HCT116 (cell line): ENCODE measurements at regions of chr10 and their contacts with region 1.

Region 1: DNA sequence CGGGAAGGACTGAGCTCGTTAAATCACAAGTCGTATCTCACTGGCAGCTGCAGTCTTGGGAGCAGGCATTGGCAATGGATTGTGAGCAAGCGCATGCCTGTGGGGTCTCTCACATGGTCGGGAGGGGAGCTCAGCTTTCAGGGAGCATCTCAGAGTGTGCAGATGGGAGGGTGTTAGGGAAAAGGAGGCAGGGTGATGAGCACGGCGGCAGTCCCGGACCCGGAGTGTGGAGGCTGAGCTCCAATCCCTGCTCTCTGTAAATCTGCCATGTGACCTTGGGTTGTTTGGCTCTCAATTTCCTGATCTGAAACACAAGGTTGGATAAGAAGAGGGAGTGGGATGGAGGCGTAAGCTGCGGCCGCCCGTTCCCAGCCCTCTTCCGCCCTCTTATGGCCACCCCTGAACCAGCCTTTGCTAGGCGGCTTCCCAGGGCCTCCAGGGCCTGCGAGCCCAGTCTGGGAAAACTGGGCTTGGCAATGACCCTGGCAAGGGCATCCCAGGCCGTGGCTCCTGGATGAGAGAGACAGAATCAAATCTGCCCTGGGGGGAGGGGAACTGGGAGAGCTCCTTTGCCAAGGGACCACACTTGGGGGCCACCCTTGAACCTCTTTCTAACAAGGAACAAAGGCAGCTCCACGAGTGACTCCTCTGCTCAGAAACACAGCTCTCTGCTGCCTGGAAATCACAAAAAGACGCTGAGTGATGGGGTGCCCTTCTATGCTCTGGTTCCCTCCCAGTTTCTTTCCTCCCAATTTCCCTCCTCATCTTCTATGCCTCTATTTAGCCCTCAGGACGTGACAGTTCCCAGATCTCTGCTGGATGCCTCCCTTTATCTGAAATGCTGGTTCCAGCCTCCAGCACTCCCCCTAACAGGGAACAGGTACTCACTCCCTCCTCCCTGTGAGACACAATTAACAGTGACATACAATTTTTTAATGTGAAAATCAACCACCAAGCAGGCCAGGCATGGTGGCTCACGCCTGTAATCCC is 41.7 kb upstream of the LOXL4 start:
- DNase-seq: peak; percentile 49
- ATAC-seq: peak; percentile 98
- H3K4me3 ChIP-seq: no peak overlapping the region
- H3K27ac ChIP-seq: no peak overlapping the region
- H3K4me1 ChIP-seq: peaks cover 2 to 13% of the 10 kb centered on the region in 2 experiments; a peak in 2 of 4 replicates
- H3K27me3 ChIP-seq: no peaks in the 10 kb centered on the region
- CTCF ChIP-seq: peak; percentile 81 to 95 (median 94)
- POLR2A ChIP-seq: no peak
- RAD21 ChIP-seq: peak; percentile 100

Region 2: GRCh38 chr10:97914837-97915211 is 394.8 kb before region 1 on chr10:
- CTCF ChIA-PET with region 1: interaction called, 3 read pairs
- POLR2A ChIA-PET with region 1: no interaction called
- RAD21 ChIA-PET with region 1: no interaction called
- intact Hi-C with region 1: loop called (anchors 2 kb)
- DNase-seq: peak; percentile 58
- ATAC-seq: peak; percentile 98
- H3K4me3 ChIP-seq: no peak overlapping the region
- H3K27ac ChIP-seq: no peak overlapping the region; the same call in 1 of the 2 replicates
- H3K4me1 ChIP-seq: peaks cover 3 to 9% of the 10 kb centered on the region in 2 experiments; a peak in 3 of 4 replicates
- H3K27me3 ChIP-seq: peaks cover 5% of the 10 kb centered on the region; the same call in 1 of the 2 replicates
- CTCF ChIP-seq: peak; percentile 92 to 97 (median 96)
- POLR2A ChIP-seq: no peak
- RAD21 ChIP-seq: peak; percentile 99

Region 3: GRCh38 chr10:98242823-98243222 is 66.8 kb before region 1 on chr10:
- CTCF ChIA-PET with region 1: interaction called, 24 read pairs
- POLR2A ChIA-PET with region 1: no interaction called
- RAD21 ChIA-PET with region 1: interaction called, 3 to 8 read pairs
- intact Hi-C with region 1: loop called (anchors 1 kb)
- DNase-seq: no peak
- ATAC-seq: peak; percentile 49; the same call in 1 of the 2 replicates
- H3K4me3 ChIP-seq: no peak overlapping the region
- H3K27ac ChIP-seq: no peak overlapping the region
- H3K4me1 ChIP-seq: no peaks in the 10 kb centered on the region
- H3K27me3 ChIP-seq: no peaks in the 10 kb centered on the region
- CTCF ChIP-seq: peak; percentile 15 to 53 (median 47); a peak in 4 of 6 replicates
- POLR2A ChIP-seq: no peak
- RAD21 ChIP-seq: peak; percentile 61

Region 4: DNA sequence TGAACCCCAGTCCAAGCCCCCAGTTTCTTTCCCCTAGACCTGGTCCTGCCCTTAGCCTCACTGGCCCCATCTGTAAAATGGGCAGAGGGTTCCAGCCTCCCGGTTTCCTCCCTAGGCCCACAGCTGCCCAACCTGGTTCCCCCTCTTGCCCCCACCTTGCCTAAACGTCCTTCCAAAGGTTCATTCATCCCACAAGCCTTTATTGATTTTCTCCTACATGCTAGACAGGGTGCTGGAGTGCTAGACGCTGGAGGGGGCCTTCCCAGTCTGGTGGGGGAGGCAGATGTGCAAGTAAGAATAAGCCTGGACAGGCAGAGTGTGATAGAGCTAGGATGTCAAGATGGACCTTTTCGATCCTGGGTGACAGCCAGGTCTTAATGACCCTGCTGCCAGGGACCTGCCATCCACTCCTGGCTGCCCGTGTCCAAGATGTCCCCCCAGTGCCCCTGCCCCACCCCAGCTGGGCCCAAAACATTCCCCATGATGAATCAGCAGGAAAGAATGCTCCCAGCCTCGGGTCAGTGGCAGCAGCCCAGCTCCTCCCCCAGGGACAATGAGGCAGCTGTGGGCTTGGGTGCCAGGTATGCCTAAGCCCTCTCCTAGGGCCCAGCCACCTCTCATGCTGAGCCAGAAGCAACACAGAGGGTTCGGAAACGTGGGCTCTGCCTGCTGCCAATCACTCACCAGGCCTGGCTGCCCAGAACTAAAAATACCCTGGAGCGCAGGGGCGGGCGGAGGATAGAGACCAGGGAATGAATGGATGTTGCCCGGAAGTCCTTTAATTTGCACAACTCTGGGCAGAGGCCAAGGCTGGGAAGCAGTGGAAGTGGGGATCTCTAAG is 40.4 kb before region 1 on chr10:
- CTCF ChIA-PET with region 1: interaction called, 36 read pairs
- POLR2A ChIA-PET with region 1: interaction called, 10 read pairs
- RAD21 ChIA-PET with region 1: interaction called, 4 to 8 read pairs
- intact Hi-C with region 1: no loop called
- DNase-seq: peak; percentile 79
- ATAC-seq: peak; percentile 76
- H3K4me3 ChIP-seq: peak overlapping the region; percentile 60 to 62
- H3K27ac ChIP-seq: peak overlapping the region; percentile 57
- H3K4me1 ChIP-seq: peaks cover 43 to 65% of the 10 kb centered on the region in 2 experiments
- H3K27me3 ChIP-seq: no peaks in the 10 kb centered on the region
- CTCF ChIP-seq: no peak
- POLR2A ChIP-seq: no peak
- RAD21 ChIP-seq: no peak

Region 5: GRCh38 chr10:98323221-98324164 is 13.8 kb after region 1 on chr10:
- CTCF ChIA-PET with region 1: interaction called, 17 read pairs
- POLR2A ChIA-PET with region 1: interaction called, 3 read pairs
- RAD21 ChIA-PET with region 1: no interaction called
- intact Hi-C with region 1: no loop called
- DNase-seq: peak; percentile 83
- ATAC-seq: peak; percentile 94
- H3K4me3 ChIP-seq: no peak overlapping the region
- H3K27ac ChIP-seq: no peak overlapping the region
- H3K4me1 ChIP-seq: peaks cover 4 to 16% of the 10 kb centered on the region in 2 experiments
- H3K27me3 ChIP-seq: peaks cover 5% of the 10 kb centered on the region; the same call in 1 of the 2 replicates
- CTCF ChIP-seq: no peak
- POLR2A ChIP-seq: no peak
- RAD21 ChIP-seq: no peak